GM18951 (cell line): ENCODE measurements at regions of chr12 and their contacts with region 1.

Region 1: DNA sequence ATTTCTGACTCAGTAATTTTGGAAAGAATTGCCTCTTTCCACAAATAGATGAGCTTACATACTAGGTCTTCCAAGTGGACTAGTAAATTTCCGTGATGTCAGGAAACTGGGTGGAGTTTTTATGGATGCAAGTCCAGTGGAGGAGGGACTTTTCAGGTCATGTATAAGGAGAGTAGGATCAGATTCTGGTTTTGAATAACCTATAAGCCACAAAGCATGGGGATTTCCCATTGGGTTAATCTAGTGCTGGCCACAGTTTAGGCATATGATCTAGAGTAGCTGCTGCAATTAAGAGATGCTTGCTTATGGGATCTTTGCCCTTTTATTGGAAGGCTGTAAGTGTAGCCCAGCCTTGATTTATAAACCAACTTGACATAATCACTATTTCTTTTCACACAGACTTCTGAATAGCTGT is 33.8 kb downstream of the STK38L start:
- POLR2A ChIP-seq: no peak

Region 2: GRCh38 chr12:27048822-27049752 is 228.8 kb before region 1 on chr12:
- in situ Hi-C with region 1: loop called (anchors 25 kb)
- POLR2A ChIP-seq: no peak

Region 3: GRCh38 chr12:27207615-27208413 is 70.0 kb before region 1 on chr12:
- in situ Hi-C with region 1: no loop called
- POLR2A ChIP-seq: no peak